Activated CD4-positive, alpha-beta memory T cell treated with anti-CD3 and anti-CD28 coated beads for 36 hours (primary cell): ENCODE measurements at regions of chr6 and their contacts with region 1.

Region 1: GRCh38 chr6:37169496-37170272 is at the start of gene PIM1:
- DNase-seq: peak; percentile 100
- H3K4me3 Mint-ChIP-seq: peak within 1 kb of the TSS; percentile 90
- H3K27ac Mint-ChIP-seq: peak within 1 kb of the TSS; percentile 97
- H3K4me1 Mint-ChIP-seq: peaks cover 32% of the 10 kb centered on the region
- H3K27me3 Mint-ChIP-seq: no peaks in the 10 kb centered on the region
- total RNA-seq, gene PIM1: 204 TPM

Region 2: DNA sequence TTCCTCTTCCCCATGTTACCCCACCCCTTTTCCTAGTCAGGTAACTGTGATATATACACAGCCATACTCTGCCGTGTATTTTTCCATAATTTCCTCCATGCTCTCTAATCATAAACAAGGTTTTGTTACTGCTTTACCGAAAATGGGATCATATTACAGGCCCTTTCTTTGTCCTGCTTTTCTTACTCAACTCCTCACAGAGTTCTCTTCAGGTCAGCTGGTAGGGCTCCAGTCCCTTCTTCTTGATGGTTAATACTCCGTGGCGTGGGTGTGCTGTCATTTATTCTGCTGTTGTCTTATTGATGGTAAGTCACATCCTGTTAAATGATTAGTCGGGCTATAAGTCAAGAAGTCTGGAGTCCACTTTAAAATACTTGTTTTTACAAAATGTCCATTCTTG is 240.1 kb before region 1 on chr6:
- CTCF ChIA-PET with region 1: no interaction called
- POLR2A ChIA-PET with region 1: no interaction called
- intact Hi-C with region 1: no loop called
- DNase-seq: no peak
- H3K4me3 Mint-ChIP-seq: no peak overlapping the region
- H3K27ac Mint-ChIP-seq: no peak overlapping the region
- H3K4me1 Mint-ChIP-seq: peaks cover 25% of the 10 kb centered on the region
- H3K27me3 Mint-ChIP-seq: no peaks in the 10 kb centered on the region

Region 3: GRCh38 chr6:37029249-37029971 is 140.3 kb before region 1 on chr6:
- CTCF ChIA-PET with region 1: interaction called, 560 read pairs
- POLR2A ChIA-PET with region 1: interaction called, 10 read pairs
- intact Hi-C with region 1: loop called (anchors 1 kb)
- DNase-seq: peak; percentile 72
- H3K4me3 Mint-ChIP-seq: no peak overlapping the region
- H3K27ac Mint-ChIP-seq: peak overlapping the region; percentile 51
- H3K4me1 Mint-ChIP-seq: peaks cover 53% of the 10 kb centered on the region
- H3K27me3 Mint-ChIP-seq: no peaks in the 10 kb centered on the region

Region 4: GRCh38 chr6:37110500-37111461 is 58.9 kb before region 1 on chr6:
- CTCF ChIA-PET with region 1: interaction called, 11 read pairs
- POLR2A ChIA-PET with region 1: interaction called, 24 read pairs
- intact Hi-C with region 1: loop called (anchors 1 kb)
- DNase-seq: peak; percentile 75
- H3K4me3 Mint-ChIP-seq: no peak overlapping the region
- H3K27ac Mint-ChIP-seq: peak overlapping the region; percentile 82
- H3K4me1 Mint-ChIP-seq: peaks cover 28% of the 10 kb centered on the region
- H3K27me3 Mint-ChIP-seq: no peaks in the 10 kb centered on the region

Region 5: DNA sequence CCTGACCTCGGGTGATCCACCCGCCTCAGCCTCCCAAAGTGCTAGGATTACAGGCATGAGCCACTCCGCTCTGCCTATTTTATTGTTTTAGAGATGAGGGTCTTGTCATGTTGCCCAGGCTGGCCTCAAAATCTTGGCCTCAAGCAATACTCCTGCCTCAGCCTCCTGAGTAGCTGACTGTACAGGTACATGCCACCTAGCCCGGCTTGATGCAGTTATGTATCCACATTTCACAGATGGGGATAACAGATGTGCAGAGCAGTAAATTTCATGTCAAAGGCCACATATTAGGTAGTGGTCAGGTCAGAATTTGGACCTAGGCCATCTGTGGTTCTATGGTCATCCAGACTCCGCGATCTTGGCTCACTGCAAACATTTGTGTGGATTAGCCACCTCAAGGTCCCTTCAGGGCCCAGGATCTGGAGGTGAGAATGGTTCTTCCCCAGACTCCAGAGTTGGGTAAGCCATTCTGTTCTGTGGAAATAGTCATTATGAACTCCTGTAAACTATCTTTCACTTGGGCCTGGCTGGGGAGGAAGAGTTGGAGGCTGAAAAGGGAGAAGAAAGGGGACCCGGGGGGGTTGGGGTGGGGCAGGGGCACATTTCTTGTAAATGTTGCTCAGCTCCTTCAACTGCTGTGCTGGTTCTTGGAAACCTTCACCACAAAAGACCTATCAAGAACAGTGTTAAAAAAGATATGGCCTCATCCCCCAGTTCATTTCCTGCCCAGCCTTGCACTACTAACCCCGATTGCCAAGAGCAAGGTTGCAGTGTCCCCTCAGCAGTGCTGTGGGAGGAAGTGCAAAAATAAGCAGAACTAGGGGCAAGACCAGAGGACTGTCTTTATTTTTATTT is 13.3 kb after region 1 on chr6:
- CTCF ChIA-PET with region 1: interaction called, 21 read pairs
- POLR2A ChIA-PET with region 1: interaction called, 9 read pairs
- intact Hi-C with region 1: loop called (anchors 1 kb)
- DNase-seq: peak; percentile 82
- H3K4me3 Mint-ChIP-seq: peak overlapping the region; percentile 48
- H3K27ac Mint-ChIP-seq: peak overlapping the region; percentile 96
- H3K4me1 Mint-ChIP-seq: peaks cover 55% of the 10 kb centered on the region
- H3K27me3 Mint-ChIP-seq: no peaks in the 10 kb centered on the region

Region 6: GRCh38 chr6:37239950-37240713 is 70.4 kb after region 1 on chr6:
- CTCF ChIA-PET with region 1: interaction called, 4 read pairs
- POLR2A ChIA-PET with region 1: interaction called, 3 read pairs
- intact Hi-C with region 1: loop called (anchors 2 kb)
- DNase-seq: peak; percentile 91
- H3K4me3 Mint-ChIP-seq: peak overlapping the region; percentile 2
- H3K27ac Mint-ChIP-seq: peak overlapping the region; percentile 88
- H3K4me1 Mint-ChIP-seq: peaks cover 41% of the 10 kb centered on the region
- H3K27me3 Mint-ChIP-seq: no peaks in the 10 kb centered on the region